Gastrocnemius medialis (tissue), 4 donors: ENCODE measurements at regions of chr1 and their contacts with region 1.

Region 1: DNA sequence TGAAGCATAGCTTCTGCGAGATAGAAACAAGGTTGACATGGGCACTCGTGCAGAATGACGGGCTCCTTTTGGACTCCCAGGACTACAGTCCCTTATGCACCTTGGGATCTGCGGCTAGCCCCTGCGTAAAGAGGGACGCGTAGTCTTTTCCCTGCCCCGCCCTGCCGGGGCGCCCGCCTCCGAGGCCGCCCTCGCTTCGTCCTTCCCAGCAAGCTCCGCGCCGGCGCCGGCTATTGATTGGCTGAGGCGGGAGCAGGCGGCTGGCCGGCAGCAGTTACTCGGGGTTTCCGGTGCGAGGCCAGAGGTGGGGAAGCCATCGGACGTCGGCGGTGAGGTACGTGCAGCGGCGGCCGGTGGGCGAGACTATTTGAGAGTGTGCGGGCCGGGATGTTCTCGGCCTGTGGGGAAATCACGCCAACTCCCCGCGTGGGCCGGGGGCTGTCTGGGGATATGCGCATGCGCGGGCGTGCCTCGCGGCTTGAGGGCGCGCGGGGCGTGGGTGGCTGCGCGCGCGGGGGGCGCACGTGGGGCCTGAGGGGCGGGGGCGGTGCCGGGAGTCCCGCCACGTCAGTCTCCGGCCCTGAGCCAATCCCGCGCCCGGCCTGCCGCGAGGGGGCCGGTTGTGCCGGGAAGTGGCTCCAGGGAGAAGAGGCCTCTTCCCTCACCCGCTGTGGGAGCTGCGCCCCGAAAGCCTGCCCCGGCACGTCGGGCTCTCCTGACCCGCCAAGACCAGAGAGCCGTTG is at the start of gene TXLNA:
- DNase-seq: peak; percentile 90 to 92
- ATAC-seq: peak; percentile 88 to 91
- H3K4me3 ChIP-seq: peak within 1 kb of the TSS; percentile 69 to 84 (median 76)
- H3K27ac ChIP-seq: peak within 1 kb of the TSS; percentile 92 to 98 (median 94)
- H3K4me1 ChIP-seq: peaks cover 33 to 40% of the 10 kb centered on the region in 2 donors
- H3K27me3 ChIP-seq: no peaks in the 10 kb centered on the region
- CTCF ChIP-seq: peak in 2 of 5 experiments; percentile 15 to 39
- POLR2A ChIP-seq: peak; percentile 72 to 75
- total RNA-seq, gene TXLNA: 15.7 to 21.0 (median 17.6) TPM

Region 2: DNA sequence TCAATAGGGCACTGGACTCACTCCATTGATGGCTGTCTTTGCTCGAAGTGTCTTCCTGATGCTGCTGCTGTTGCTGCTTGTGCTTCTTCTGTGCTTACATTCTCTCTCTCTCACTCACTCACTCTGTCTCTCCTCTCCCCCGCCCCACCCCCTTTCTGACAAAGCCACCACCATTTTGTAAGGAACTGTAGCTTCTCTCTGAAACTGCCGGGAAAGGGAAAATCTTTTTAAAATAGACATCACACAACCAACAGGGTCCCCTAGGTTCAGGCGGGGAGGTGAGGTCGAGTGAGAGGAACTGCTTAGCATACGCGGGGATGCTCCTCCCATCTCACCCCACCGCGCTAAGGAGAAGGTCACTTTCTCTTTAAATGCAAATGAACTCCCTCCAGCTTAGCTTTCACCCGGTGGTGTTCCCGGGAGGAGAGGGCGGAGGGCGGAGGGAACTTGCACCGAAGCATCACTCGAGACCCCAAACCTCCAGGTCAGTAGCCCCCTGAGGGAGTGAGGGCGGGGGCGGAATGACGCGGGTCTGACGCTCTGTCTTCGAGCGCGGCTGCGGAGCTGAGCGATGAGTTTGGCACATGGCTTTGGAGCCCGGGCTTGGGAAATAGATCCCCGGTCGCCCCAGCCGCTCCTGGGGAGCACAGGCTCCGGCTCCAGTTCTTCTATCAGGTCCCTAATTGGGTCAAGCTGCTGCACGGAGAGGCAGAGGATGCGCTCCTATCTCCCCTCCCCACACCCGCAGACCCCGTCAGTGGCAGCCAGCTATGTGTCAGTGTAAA is 20.8 kb after region 1 on chr1 and contains the start of gene CCDC28B:
- in situ Hi-C with region 1: no loop called
- intact Hi-C with region 1: loop called (anchors 2 kb)
- DNase-seq: peak; percentile 61 to 70
- ATAC-seq: peak; percentile 58 to 62
- H3K4me3 ChIP-seq: peak within 1 kb of the TSS; percentile 65 to 84 (median 72)
- H3K27ac ChIP-seq: peak within 1 kb of the TSS; percentile 86 to 99 (median 94)
- H3K4me1 ChIP-seq: peaks cover 49 to 70% of the 10 kb centered on the region in 2 donors
- H3K27me3 ChIP-seq: no peaks in the 10 kb centered on the region
- CTCF ChIP-seq: no peak
- POLR2A ChIP-seq: peak; percentile 70 to 93
- total RNA-seq, gene CCDC28B: 16.4 to 79.0 (median 56.8) TPM

Region 3: DNA sequence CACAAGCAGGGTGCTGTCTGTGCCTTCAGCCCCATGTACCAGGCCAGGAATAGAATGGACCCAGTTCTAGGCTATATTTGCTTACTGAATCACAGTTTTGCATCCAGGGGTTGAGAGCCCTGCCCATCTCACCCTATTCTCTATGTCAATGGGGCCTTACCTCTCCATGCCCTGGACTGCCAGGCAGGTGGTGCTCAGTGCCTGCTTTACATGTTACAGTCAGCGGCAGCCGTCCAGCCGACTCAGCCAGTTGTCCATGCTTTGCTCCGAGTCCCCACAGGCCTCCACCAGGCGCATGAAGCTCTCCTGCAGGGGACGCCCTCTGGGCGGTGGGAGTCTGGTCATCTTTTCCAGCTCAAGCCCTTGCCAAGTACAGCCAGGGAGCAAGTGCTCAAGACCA is 55.2 kb after region 1 on chr1:
- in situ Hi-C with region 1: no loop called
- intact Hi-C with region 1: no loop called
- DNase-seq: peak in 1 of 2 donors; percentile 32
- ATAC-seq: peak; percentile 50 to 57
- H3K4me3 ChIP-seq: no peak overlapping the region
- H3K27ac ChIP-seq: peak overlapping the region in 1 of 4 donors; percentile 62
- H3K4me1 ChIP-seq: no peaks in the 10 kb centered on the region
- H3K27me3 ChIP-seq: no peaks in the 10 kb centered on the region
- CTCF ChIP-seq: no peak
- POLR2A ChIP-seq: no peak